ENCODE measurements at regions of chr3 and their contacts with region 1.

Region 1: DNA sequence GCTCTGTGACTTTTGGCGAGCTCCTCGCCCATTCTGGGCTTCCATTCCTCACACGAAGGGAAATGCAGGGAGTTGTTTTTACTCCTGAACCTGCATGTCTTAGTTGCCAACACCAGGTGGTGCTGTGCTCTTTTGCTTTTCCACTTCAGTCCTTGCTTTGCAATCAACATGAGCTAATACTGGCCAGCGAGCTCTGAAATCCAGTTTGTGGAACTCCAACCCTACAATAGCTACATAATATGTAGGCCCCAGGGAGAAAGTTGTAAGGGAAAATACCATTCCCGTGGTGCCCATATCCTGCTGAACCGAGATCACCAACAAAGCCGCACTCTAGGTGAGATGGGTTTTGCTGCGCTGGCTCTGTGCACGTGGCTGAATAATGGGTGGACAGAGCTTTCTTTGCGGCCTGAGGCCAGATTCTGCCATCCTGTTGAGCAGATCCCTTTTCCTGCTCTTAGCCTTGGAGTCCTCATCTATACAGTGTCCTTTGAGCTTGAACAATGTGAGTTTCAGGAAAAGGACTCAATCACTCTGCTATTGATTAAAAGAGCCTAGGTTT is 25.0 kb downstream of the LSM3 start:
- DNase-seq: peak; percentile 58
- H3K4me3 ChIP-seq: no peak overlapping the region
- CTCF ChIP-seq: peak; percentile 77

Region 2: DNA sequence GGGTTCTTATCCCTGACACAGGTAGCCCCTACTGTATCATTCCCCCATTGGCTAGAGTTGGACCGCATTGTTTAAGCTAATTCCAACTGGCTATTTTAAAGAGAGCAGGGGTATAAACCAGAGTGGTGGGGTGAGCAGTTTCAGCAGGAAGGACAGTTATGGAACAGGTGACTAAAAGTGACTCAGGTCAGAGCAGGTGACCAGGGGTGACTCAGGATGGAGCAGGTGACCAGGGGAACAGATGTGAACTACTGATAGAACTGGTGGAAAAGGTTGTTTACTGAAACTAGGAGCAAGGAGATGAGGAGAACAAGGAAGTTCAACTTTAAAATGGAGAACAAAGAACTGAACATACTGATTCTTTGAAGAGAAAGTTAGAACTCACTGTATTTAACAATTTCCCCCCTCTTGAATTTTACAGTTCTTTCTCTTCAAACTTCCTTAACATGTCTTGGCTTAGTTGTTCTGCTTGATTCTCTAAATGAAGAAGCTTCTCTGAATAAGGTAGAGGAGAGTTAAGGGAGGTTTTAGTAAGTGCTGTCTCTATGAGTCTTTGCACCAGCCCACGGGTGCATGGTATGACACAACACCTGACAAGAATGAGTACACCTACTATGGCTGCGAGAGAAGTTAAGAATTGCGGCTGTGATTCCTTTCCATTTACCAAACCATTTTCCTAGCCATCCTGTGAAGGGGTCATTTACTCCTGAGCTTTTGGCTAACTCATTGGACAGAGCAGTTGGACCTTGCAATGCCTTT is 240.3 kb before region 1 on chr3:
- CTCF ChIA-PET with region 1: no interaction called
- POLR2A ChIA-PET with region 1: no interaction called
- DNase-seq: no peak
- H3K4me3 ChIP-seq: no peak overlapping the region
- CTCF ChIP-seq: no peak

Region 3: DNA sequence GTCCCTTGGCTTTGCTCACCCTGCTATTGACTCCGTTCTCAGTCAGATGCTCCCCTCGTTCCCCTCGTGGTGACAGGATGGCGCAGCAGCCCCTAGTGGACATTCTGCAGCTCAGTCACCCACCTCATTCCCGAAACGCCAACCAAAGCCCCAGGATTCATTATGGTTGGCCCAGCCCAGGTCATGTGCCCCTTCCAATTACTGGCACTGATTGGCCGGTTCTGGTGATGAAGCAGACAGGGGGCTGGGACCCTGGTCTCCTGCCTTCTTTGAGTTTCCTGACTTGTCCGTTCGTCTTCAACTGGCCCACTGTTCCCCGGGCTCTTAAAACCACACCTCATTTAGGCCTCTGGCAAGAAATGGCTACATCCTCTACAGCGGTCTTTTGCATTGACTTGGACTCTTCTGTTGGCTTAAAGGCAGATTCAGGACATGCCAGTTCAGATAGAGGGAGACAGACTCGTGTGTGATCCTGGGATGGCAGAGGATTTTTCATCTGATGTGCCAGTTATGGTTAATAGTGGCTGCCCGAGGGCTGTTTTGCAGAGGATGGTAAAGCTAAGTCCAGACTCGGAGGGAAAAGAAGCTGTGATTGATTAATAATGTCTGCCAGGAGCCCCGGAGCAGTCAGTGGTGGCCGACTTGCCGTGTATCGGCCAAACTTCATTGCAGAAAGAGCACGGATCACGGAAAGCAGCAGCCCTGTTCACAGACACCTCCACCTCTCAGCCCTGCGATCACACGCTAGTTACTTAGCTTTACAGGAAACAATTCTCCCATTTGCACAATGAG is 12.9 kb after region 1 on chr3:
- CTCF ChIA-PET with region 1: interaction called, 75 read pairs
- POLR2A ChIA-PET with region 1: interaction called, 6 read pairs
- DNase-seq: no peak
- H3K4me3 ChIP-seq: no peak overlapping the region
- CTCF ChIP-seq: no peak

Region 4: DNA sequence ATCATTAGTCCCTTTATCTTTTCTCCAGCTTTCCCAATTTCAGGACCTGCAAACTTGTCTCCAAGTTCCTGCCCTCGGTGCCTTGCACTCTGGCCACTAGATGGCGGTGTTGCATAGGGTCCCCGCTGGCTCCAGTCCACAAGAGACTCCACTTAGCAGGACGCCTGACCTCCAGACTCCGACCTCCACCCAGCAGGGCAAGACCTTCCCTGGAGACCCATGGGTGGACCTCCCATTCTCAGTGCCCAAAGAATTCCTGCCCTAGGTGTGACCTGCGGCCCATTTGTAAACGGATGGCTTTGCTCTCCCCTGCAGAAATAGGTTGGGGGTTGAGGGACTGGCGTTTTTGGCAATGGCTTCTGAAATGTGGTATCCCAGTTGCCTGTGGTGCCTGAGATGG is 57.6 kb after region 1 on chr3:
- CTCF ChIA-PET with region 1: interaction called, 113 read pairs
- POLR2A ChIA-PET with region 1: no interaction called
- DNase-seq: no peak
- H3K4me3 ChIP-seq: no peak overlapping the region; the same call in 1 of the 2 replicates
- CTCF ChIP-seq: peak; percentile 97

Region 5: GRCh38 chr3:14413381-14414071 is 209.9 kb after region 1 on chr3:
- CTCF ChIA-PET with region 1: interaction called, 27 read pairs
- POLR2A ChIA-PET with region 1: no interaction called
- DNase-seq: no peak
- H3K4me3 ChIP-seq: no peak overlapping the region
- CTCF ChIP-seq: no peak

Region 6: DNA sequence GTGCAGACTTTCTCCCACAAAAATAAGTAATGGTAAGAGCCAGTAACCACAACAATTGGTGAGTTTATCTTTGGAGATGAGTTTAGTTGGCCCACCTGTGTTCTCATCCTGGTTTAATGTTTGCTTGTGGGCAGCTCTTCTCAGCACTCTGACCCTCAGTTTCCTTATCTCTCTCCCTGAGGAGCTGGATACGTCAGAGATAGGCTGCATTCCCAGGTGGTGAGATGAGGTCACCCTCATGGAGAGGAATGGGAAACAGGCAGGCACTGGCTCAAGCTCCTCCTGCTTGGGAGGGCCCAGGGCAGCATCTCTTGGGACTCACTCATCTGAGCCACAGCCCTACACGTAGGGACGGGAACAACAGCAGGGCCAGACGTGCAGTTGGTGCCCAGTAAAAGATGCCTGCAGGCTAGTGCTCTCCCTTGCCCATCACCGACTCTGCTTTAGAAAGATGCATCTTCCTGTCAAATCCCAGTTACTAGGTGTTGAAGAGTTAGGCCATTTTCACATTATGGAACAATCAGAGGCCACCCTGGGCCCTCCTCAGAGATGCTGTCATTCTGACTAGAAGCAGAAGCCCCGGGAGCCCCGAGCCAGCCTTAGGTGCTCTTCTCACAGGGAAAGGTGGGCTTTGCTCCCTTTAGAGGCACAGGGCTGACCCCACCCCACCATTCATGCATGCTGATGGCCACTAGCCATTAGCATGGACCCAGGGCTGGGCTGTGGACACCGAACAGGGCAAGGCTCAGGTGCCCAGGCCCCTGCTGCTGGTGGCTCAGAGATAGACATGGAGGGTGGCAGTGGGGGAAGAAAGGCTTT is 276.8 kb after region 1 on chr3:
- CTCF ChIA-PET with region 1: interaction called, 23 read pairs
- POLR2A ChIA-PET with region 1: no interaction called
- DNase-seq: no peak
- H3K4me3 ChIP-seq: no peak overlapping the region
- CTCF ChIP-seq: no peak

Region 7: DNA sequence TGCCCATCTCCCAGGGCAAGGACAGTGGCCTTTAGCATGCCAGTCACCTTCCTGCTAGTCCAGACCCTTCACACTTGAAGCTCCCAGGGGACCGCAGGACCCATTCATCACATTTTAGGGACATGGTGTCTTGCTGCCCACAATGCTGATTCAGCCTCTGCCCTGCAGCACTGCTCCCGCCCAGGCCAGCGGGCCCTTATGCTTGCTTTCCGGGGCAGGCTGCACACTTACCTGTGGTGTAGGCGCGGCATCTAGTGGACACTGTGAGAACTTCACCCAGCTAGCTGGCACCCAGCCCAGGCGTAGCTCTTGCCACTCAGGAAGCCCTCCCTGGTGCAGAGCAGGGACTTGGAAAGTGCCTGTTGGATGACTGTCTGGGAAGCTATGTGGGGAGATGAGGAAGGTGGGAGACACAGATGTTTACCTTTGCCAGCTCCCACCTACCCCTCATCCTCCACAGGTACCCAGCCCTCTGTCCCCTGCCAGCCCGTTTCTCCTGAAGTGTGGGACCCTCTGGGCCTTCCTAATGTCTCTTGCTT is 717.5 kb after region 1 on chr3:
- CTCF ChIA-PET with region 1: interaction called, 14 read pairs
- POLR2A ChIA-PET with region 1: no interaction called
- DNase-seq: peak; percentile 42
- H3K4me3 ChIP-seq: no peak overlapping the region
- CTCF ChIP-seq: peak; percentile 95

Measured in AG04449 (cell line).